Activated CD4-positive, alpha-beta T cell treated with anti-CD3 and anti-CD28 coated beads, Interleukin-2, amount 10 ng/mL, durations not matched to agents 7 days and 5 days (primary cell): ENCODE measurements at regions of chr1 and their contacts with region 1.

Region 1: GRCh38 chr1:37486680-37487618 is 12.6 kb downstream of the ZC3H12A start:
- DNase-seq: peak; percentile 73
- H3K4me3 Mint-ChIP-seq: no peak overlapping the region
- H3K27ac Mint-ChIP-seq: peak overlapping the region; percentile 73
- H3K4me1 Mint-ChIP-seq: peaks cover 10% of the 10 kb centered on the region
- H3K27me3 Mint-ChIP-seq: no peaks in the 10 kb centered on the region

Region 2: DNA sequence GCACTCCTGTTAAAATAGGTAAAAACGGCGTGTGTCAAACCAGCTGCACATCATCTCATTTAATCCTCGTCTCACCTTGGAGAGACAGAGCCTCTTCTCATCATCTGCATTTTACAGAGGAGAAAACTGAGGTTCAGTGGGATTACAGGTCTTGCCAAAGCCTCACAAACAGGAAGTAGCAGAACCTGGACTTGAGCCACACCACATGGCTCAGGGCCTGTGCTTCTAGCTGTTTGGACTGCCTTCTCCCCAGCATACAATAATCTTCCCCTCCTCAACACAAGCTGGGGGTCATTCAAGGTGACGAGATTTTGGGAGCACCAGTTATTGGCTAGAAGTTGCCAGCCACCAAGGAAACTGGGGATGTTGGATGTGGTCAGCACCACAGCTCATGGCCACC is 180.5 kb before region 1 on chr1:
- CTCF ChIA-PET with region 1: no interaction called
- POLR2A ChIA-PET with region 1: no interaction called
- DNase-seq: no peak
- H3K4me3 Mint-ChIP-seq: no peak overlapping the region
- H3K27ac Mint-ChIP-seq: no peak overlapping the region
- H3K4me1 Mint-ChIP-seq: no peaks in the 10 kb centered on the region
- H3K27me3 Mint-ChIP-seq: no peaks in the 10 kb centered on the region

Region 3: GRCh38 chr1:37453647-37454046 is 33.3 kb before region 1 on chr1:
- CTCF ChIA-PET with region 1: interaction called, 44 read pairs
- POLR2A ChIA-PET with region 1: no interaction called
- DNase-seq: no peak
- H3K4me3 Mint-ChIP-seq: no peak overlapping the region
- H3K27ac Mint-ChIP-seq: no peak overlapping the region
- H3K4me1 Mint-ChIP-seq: peaks cover 23% of the 10 kb centered on the region
- H3K27me3 Mint-ChIP-seq: no peaks in the 10 kb centered on the region

Region 4: GRCh38 chr1:37461469-37462436 is 25.2 kb before region 1 on chr1:
- CTCF ChIA-PET with region 1: interaction called, 44 read pairs
- POLR2A ChIA-PET with region 1: no interaction called
- DNase-seq: no peak
- H3K4me3 Mint-ChIP-seq: no peak overlapping the region
- H3K27ac Mint-ChIP-seq: no peak overlapping the region
- H3K4me1 Mint-ChIP-seq: peaks cover 4% of the 10 kb centered on the region
- H3K27me3 Mint-ChIP-seq: no peaks in the 10 kb centered on the region

Region 5: DNA sequence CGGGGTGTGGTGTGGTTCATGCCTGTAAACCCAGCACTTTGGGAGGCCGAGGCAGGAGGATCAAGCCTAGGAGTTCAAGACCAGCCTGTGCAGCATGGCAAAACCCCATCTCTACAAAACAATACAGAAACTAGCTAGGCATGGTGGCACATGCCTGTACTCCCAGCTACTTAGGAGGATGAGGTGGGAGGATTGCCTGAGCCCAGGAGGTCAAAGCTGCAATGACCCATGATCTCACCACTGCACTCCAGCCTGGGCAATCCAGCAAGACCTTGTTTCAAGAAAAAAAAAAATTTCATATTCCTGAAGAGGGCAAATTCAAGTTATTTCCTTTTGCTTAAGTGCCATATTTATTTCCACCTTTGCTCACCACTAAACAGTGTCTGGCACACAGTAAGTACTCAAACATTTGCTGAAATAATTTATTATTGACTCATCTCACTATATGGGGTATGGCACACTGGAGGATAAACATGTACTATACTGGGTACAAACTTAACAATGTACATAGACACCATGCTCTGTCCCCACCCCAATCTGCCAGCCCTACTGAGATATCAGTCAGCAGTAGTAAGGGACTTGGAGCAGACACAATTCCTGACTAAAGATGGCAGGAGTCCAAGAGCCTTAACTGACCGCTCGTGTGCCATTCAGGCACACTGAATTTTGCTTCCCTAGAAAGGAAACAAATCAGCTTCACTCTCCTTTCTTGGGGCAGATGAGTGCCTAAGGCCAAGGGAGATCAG is 12.1 kb after region 1 on chr1:
- CTCF ChIA-PET with region 1: interaction called, 13 read pairs
- POLR2A ChIA-PET with region 1: no interaction called
- DNase-seq: no peak
- H3K4me3 Mint-ChIP-seq: no peak overlapping the region
- H3K27ac Mint-ChIP-seq: no peak overlapping the region
- H3K4me1 Mint-ChIP-seq: no peaks in the 10 kb centered on the region
- H3K27me3 Mint-ChIP-seq: no peaks in the 10 kb centered on the region

Region 6: DNA sequence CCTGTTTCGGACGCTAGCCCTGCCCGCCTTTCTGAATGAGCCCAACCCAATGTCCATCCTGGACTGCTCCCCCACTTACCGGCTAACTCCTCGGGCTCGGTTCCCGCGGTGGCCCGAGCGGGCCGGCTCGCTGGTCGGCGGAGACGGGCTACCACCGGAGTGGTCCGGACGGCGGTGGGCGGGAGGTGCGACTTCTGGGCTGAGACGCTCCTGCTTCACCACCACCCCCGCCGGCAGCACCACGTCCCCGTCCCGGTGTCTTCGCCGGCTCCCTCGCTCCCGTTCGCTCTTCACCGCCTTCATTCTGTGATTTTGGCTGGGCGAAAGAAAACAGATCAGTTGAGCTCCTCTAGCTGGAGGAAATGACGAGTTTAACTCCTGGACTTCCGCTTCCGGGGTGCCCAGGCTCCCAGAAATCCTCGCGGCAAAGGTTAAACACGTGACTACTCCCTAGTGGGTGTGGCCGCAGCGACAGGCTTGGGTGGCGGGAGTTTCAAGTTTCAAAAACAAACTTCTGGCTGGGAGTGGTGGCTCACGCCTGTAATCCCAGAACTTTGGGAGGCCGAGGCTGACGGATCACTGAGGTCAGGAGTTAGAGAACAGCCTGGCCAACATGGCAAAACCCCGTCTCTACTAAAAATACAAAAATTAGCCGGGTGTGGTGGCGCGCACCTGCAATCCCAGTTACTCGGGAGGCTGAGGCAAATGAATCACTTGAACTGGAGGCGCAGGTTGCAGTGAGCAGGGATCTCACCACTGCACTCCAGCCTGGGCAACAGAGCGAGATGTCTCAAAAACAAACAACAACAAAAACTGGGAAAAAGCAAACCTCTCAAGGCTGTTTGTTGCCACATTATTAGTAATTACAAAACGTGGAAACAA is 67.2 kb after region 1 on chr1 and contains the start of gene SNIP1:
- CTCF ChIA-PET with region 1: no interaction called
- POLR2A ChIA-PET with region 1: no interaction called
- DNase-seq: peak; percentile 95
- H3K4me3 Mint-ChIP-seq: peak within 1 kb of the TSS; percentile 97
- H3K27ac Mint-ChIP-seq: peak within 1 kb of the TSS; percentile 98
- H3K4me1 Mint-ChIP-seq: peaks cover 62% of the 10 kb centered on the region
- H3K27me3 Mint-ChIP-seq: no peaks in the 10 kb centered on the region
- total RNA-seq, gene SNIP1: 27.0 to 27.6 TPM